ENCODE measurements at regions of chr9 and their contacts with region 1.

Region 1: GRCh38 chr9:110256380-110257096 is at the start of gene TXN:
- H3K4me3 ChIP-seq: peak within 1 kb of the TSS; percentile 87
- H3K27ac ChIP-seq: peak within 1 kb of the TSS; percentile 95
- H3K4me1 ChIP-seq: peaks cover 5% of the 10 kb centered on the region; the same call in 1 of the 2 replicates
- CTCF ChIP-seq: no peak

Region 2: GRCh38 chr9:110241260-110241857 is 15.2 kb before region 1 on chr9:
- CTCF ChIA-PET with region 1: no interaction called
- POLR2A ChIA-PET with region 1: interaction called, 14 read pairs
- H3K4me3 ChIP-seq: no peak overlapping the region
- H3K27ac ChIP-seq: no peak overlapping the region
- H3K4me1 ChIP-seq: no peaks in the 10 kb centered on the region
- CTCF ChIP-seq: no peak

Region 3: DNA sequence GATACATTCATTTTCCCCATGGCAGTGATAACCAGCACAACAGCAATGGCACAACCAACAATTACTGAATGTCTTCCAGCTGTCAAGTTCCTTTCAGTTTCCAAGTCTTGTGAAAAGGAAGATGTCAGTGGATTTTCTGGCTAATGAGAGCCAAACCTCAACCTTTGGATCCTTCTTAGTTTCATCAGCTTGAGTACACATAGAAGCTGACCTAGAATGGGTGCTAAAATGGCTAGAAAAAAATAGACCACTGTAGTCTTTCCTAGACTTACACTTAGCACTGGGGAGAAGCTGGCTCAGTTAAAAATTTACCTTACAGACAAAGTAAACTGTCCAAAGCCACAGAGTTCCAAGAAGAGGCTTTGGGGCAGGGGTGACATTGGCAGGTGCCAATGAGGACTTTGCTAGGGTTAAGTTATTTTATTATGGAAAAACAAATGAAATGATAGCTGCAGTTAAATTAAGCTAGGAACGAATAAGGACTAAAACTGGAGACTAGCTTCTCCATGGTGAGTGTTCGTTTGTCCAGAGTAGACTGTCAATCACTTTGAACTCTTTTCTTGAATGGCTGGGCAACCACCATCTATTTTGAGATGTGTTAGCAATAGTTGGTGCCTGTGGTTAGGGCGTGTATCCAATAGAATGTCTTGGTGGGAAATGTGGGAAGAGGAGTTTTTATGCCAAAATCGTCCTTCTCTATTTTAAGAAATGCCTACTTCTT is 25.6 kb after region 1 on chr9:
- CTCF ChIA-PET with region 1: no interaction called
- POLR2A ChIA-PET with region 1: interaction called, 12 read pairs
- H3K4me3 ChIP-seq: no peak overlapping the region
- H3K27ac ChIP-seq: no peak overlapping the region
- H3K4me1 ChIP-seq: no peaks in the 10 kb centered on the region
- CTCF ChIP-seq: no peak

Measured in HEK293 (cell line).